PC-3 (cell line): ENCODE measurements at regions of chr15 and their contacts with region 1.

Region 1: DNA sequence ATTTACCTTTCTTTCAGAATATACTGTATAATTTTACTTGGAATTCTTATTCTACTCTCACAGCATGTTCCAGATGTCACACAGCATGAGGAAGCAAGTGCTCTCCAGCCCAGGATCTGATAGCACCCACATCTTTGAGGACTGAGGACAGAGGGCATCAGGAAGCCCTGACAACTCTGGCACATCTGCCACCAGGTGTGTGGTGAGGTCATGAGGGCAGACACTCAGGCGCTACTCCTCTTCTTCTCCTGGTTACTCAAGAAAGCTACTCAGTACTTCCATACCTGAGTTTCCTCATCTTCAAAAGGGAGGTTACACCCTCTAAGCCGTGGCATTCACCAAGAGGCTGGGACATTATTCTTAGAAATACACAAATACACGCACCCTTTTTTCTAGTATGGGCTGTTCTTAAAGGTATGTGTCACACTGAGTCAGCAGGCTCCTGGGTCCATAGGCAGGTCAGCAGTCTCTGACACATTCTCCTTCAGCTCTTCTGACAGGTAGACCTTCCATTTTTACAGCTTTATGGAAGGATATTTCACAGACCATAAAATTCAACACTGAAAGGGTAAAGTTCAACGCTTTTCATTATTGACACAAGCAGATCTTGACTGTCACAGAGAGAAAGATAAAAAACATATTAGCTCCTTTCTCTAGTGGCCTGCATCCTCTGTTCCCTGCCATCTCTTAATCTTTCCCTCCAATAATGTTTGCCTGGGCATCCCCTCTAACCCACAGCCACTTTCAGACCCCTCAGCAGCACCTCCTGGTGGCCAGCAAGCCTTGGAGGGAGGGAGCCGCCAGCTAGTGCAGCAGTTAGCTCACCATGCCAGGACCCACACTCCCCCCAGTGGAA is 103.2 kb upstream of the TJP1 start:
- DNase-seq: peak; percentile 97
- ATAC-seq: peak; percentile 81
- H3K4me3 ChIP-seq: peak overlapping the region; percentile 20; the same call in 1 of the 2 replicates
- H3K27ac ChIP-seq: peak overlapping the region; percentile 92
- H3K4me1 ChIP-seq: peaks cover 61% of the 10 kb centered on the region
- H3K27me3 ChIP-seq: no peaks in the 10 kb centered on the region
- CTCF ChIP-seq: peak; percentile 98

Region 2: GRCh38 chr15:29747837-29748417 is 177.5 kb before region 1 on chr15:
- CTCF ChIA-PET with region 1: interaction called, 63 read pairs
- POLR2A ChIA-PET with region 1: interaction called, 5 read pairs
- intact Hi-C with region 1: loop called (anchors 2 kb)
- DNase-seq: peak; percentile 64
- ATAC-seq: peak; percentile 42; the same call in 1 of the 2 replicates
- H3K4me3 ChIP-seq: no peak overlapping the region
- H3K27ac ChIP-seq: no peak overlapping the region
- H3K4me1 ChIP-seq: no peaks in the 10 kb centered on the region
- H3K27me3 ChIP-seq: no peaks in the 10 kb centered on the region
- CTCF ChIP-seq: peak; percentile 71

Region 3: DNA sequence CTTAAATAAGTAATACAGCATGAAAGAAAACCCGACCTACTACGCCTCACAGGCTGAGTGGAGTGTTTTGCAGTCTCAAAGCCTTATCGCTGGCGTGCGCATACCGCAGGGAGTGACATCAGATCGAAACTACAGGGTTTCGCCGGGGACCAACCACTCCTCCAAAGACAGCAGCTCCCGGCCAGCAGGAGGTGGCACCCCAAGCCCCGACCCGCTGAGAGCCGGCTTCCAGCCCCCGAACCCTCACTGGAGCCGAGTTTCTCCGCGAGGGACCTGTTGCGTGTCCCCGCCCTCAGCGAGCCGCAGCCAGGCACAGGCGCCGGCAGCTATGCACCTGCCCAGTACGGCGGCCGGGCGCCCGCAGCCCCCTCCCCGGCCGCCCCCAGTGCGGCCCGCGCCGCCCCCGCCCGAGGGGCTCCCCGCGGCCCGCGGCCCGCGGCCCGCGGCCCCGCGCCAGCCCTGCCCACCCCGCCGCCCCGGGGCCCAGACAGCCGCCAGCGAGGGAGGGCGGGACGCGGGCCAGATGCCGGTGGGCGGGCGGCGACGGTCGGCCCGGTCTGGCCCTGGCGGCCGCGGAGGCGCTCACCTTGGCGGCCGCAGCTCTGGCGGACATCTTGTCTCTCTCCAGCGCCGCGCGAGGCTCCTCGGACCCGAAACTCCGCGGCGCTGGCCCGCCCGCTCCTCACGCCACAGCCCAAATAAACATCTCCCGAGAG is 103.9 kb before region 1 on chr15:
- CTCF ChIA-PET with region 1: interaction called, 5 read pairs
- POLR2A ChIA-PET with region 1: interaction called, 10 read pairs
- intact Hi-C with region 1: loop called (anchors 2 kb)
- DNase-seq: peak; percentile 84
- ATAC-seq: peak; percentile 52
- H3K4me3 ChIP-seq: peak overlapping the region; percentile 95
- H3K27ac ChIP-seq: peak overlapping the region; percentile 88
- H3K4me1 ChIP-seq: peaks cover 34% of the 10 kb centered on the region
- H3K27me3 ChIP-seq: no peaks in the 10 kb centered on the region
- CTCF ChIP-seq: 0 out of 2 replicates have a peak, but pooled peaks have one; percentile 16

Region 4: DNA sequence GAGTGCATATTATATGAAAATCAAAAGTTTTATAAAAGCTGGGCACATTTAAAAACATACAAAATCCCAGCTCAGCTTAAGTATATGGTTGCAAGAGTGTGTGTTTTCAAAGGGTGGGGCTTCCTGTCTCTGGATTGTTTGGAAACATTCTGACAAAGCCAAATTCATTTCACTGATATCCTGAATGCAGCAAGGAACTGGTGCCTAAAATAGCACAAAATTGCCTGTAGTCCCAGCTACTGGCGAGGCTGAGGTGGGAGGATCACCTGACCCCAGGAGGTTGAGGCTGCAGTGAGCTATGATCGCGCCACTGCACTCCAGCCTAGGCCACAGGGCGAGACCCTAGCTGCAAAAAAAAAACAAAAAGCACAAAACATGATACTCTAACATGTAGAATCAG is 90.2 kb before region 1 on chr15:
- CTCF ChIA-PET with region 1: interaction called, 18 read pairs
- POLR2A ChIA-PET with region 1: interaction called, 3 read pairs
- intact Hi-C with region 1: no loop called
- DNase-seq: peak; percentile 66
- ATAC-seq: peak; percentile 98
- H3K4me3 ChIP-seq: no peak overlapping the region
- H3K27ac ChIP-seq: peak overlapping the region; percentile 9; the same call in 1 of the 2 replicates
- H3K4me1 ChIP-seq: peaks cover 13% of the 10 kb centered on the region
- H3K27me3 ChIP-seq: no peaks in the 10 kb centered on the region
- CTCF ChIP-seq: no peak

Region 5: DNA sequence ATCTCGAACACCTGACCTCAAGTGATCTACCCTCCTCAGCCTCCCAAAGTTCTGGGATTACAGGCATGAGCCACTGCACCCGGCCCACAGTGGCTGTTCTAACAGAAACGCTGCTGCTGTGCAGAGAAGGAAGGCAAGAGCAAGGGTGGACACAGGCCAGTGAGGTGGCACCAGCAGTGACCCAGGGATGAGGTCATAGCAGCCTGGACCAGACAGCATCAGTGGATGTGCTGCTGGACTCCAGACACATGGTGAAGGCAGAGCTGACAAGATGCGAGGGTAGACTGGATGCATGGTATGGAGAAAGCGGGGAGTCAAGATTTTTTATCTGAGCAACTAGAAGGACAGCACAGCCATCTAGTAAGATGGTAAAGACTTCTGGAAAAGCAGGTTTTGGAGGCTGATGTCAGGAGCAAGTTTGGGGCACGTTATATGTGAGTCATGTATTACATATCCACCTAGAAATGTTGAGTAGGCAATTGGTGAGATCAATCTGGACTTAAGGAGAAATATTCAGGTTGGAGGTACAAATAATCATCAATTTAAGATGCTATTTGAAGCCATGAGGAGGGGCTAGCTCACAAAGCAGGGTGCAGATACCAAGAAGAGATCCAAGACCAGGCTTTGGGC is 81.1 kb before region 1 on chr15:
- CTCF ChIA-PET with region 1: interaction called, 3 read pairs
- POLR2A ChIA-PET with region 1: interaction called, 3 read pairs
- intact Hi-C with region 1: loop called (anchors 2 kb)
- DNase-seq: peak; percentile 95
- ATAC-seq: peak; percentile 43
- H3K4me3 ChIP-seq: peak overlapping the region; percentile 29; the same call in 1 of the 2 replicates
- H3K27ac ChIP-seq: peak overlapping the region; percentile 83
- H3K4me1 ChIP-seq: peaks cover 41% of the 10 kb centered on the region
- H3K27me3 ChIP-seq: no peaks in the 10 kb centered on the region
- CTCF ChIP-seq: no peak

Region 6: DNA sequence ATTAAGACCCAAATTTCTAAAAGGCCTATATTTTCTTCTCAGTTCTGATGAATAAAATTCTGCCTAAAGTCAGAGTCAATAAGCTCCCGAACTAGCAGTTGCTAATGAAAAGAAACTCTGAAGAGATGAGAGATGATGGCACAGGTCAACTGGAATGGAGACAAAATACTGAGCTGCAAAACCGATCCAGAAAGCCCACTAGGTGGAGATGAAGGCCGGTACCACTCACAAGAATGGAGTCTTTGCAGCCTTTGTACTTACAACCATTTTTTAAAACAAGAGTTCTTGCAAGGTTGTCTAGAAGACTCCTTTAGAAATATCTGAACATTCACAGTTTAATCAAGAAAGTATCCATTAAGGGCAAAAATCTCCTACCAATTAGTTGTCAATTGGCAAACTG is 16.7 kb after region 1 on chr15:
- CTCF ChIA-PET with region 1: interaction called, 13 read pairs
- POLR2A ChIA-PET with region 1: interaction called, 4 read pairs
- intact Hi-C with region 1: no loop called
- DNase-seq: peak; percentile 35
- ATAC-seq: no peak
- H3K4me3 ChIP-seq: no peak overlapping the region
- H3K27ac ChIP-seq: no peak overlapping the region
- H3K4me1 ChIP-seq: peaks cover 21% of the 10 kb centered on the region
- H3K27me3 ChIP-seq: no peaks in the 10 kb centered on the region
- CTCF ChIP-seq: peak; percentile 62

Region 7: DNA sequence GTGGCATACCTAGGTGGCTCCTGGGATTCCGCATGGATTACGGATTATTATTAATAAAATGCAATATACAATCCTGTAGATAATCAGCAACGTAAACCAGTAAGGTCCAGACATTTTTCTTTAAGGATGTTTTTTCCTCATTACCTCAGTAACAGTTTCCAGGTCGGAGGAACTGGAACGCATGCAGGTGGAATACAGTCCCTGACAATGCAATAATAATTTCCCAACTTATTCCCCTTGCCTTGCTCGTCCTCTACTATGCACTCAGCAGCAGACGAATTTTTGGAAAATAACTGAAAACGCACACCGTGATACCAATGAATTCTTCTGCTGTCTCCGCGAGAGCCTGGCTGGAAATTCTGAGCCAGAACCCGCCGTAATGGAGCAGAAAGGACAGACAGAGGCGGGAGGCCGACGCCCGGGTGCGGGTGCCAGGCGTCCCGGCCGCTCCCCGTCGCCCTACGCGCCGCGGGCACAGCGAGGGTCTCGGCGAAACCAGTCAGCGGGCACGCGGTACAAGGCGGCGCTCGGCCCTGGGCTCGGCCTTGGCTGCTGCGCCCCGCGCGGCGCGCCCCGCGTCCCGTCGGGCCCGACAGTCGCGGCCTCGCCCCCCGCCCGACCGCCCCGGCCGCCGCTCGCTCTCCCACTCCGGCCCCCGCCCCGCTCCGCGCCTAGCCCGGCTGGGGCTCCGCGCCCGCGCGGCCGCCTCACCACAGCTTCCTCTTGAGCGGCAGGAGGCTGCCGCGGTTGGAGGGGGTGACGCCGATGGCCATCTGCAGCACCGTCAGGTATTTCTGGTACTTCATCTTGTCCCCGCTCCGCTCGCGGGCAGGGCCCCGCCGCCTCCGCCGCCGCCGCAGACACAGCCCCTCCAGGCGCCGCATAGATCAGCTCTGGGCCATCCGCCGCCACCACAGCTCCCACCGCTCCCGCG is 42.8 kb after region 1 on chr15:
- CTCF ChIA-PET with region 1: no interaction called
- POLR2A ChIA-PET with region 1: no interaction called
- intact Hi-C with region 1: no loop called
- DNase-seq: peak; percentile 27
- ATAC-seq: peak; percentile 60
- H3K4me3 ChIP-seq: peak overlapping the region; percentile 65
- H3K27ac ChIP-seq: no peak overlapping the region
- H3K4me1 ChIP-seq: peaks cover 8% of the 10 kb centered on the region; the same call in 1 of the 2 replicates
- H3K27me3 ChIP-seq: 0 out of 2 replicates have a peak, but pooled peaks cover 5% of the 10 kb centered on the region
- CTCF ChIP-seq: no peak